WTC11 (cell line): ENCODE measurements at regions of chr19 and their contacts with region 1.

Region 1: DNA sequence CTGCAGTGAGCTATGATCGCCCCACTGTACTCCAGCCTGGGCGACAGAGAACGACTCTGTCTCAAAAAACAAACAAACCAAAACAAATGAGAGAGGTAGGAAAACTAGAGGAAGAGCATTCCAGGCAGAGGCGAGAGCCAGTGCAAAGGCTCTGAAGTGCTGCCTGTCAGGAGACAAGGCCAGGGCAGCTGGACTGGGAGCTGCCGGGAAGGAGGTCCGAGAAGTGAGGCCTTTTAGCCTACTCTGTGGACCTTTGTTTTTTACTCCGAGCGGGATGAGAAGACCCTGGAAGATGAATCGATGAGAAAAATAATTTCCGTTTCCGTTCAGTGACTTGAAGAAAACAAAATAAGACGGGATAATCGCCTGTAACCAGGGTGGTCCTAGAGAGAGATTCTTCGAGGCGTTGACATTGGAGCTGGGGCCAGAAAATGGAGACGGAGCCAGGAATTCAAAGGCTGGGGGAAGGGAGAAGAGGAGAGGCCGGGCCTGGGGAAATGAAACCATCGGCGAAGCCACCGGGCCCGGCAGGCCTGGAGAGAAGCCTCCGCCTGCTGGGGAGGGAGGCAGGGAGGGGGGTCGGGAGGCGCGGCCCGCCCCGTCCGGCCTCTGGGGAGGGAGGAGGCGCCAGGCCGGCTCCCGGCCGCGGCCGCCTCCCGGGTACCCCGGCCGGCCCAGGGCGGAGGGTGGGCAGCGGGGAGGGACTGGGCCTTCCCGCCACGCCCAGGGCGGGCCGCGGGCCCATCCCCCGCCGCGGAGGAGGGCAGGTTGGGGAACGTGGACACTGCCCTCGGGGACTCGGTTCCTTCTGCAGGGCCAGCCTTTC is 7.8 kb upstream of the SERTAD1 start:
- DNase-seq: peak; percentile 80
- ATAC-seq: peak; percentile 91
- H3K4me3 Mint-ChIP-seq: peak overlapping the region; percentile 77
- H3K27ac Mint-ChIP-seq: peak overlapping the region; percentile 99
- H3K4me1 Mint-ChIP-seq: peaks cover 14% of the 10 kb centered on the region
- H3K27me3 Mint-ChIP-seq: no peaks in the 10 kb centered on the region
- CTCF ChIP-seq: no peak

Region 2: GRCh38 chr19:40444192-40445028 is 10.8 kb after region 1 on chr19 and contains the start of gene SERTAD3:
- CTCF ChIA-PET with region 1: interaction called, 21 read pairs
- POLR2A ChIA-PET with region 1: interaction called, 28 read pairs
- DNase-seq: peak; percentile 97
- ATAC-seq: peak; percentile 68
- H3K4me3 Mint-ChIP-seq: peak within 1 kb of the TSS; percentile 94
- H3K27ac Mint-ChIP-seq: peak within 1 kb of the TSS; percentile 99
- H3K4me1 Mint-ChIP-seq: peaks cover 27% of the 10 kb centered on the region
- H3K27me3 Mint-ChIP-seq: no peaks in the 10 kb centered on the region
- CTCF ChIP-seq: no peak
- total RNA-seq, gene SERTAD3: 31.9 to 34.6 TPM (median 33.6 TPM) in 3 replicates